Activated naive CD4-positive, alpha-beta T cell treated with anti-CD3 and anti-CD28 coated beads for 36 hours (primary cell): ENCODE measurements at regions of chr14 and their contacts with region 1.

Region 1: DNA sequence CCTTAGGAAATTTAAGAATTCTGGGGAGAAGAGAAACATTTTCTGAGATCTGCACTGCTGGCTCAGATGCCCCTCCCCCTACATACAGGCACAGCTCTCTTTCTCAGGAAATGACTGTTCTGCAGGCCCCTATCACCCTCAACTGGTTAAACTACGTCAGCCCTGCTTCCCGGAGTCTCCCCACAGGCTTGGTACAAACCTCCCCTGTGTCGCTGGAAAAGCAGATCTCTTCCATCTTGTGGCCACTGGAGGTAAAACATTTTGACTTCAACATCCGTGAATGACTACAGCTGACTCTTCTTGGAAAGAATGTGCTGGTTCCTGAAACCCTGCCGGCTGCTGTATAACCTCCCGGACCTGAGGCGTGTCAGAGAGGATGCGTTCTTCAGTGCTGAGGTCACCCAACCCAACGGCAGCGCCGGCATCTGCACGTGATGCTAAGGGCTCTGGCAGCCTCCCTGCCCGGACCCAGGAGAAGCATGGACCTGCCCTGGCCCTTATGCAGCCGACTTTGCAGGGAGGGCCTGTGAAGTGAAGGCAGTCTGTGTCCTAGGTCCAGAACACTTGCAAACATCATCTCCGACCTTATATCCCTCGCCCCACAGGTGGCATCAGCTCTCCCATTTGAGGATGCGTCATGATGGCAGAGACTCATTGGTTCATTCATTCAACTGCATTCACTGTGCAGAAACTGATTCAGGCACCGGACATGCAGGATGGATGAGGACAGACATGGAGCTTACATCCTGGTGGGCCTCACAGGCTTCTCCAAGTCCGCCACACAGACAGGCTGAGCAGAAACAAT is 129.3 kb downstream of the GCH1 start:
- DNase-seq: peak; percentile 95
- H3K4me3 Mint-ChIP-seq: peak overlapping the region; percentile 44
- H3K27ac Mint-ChIP-seq: peak overlapping the region; percentile 84
- H3K4me1 Mint-ChIP-seq: peaks cover 51% of the 10 kb centered on the region
- H3K27me3 Mint-ChIP-seq: no peaks in the 10 kb centered on the region

Region 2: DNA sequence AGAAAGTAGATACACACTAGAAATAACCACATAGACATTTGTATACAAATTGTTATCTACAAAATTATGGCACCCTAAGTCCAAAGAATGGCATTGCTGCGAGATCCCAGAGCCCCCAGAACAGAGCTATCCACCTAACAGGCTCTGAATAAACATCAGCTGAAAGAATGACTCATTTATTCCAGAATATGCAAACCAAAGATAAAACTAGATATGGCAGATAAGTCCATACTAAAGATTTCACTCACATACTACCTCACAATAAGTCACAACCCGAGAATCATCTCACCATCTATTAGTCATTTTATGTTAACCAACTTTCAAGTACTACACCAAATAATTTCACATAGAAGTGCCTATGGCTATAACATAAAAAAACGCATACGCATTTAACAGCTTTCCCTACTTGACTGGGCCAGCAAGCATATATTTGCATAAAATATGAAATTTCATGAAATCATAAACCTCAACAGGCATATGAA is 337.8 kb before region 1 on chr14:
- CTCF ChIA-PET with region 1: no interaction called
- intact Hi-C with region 1: loop called (anchors 1 kb)
- DNase-seq: peak; percentile 16
- H3K4me3 Mint-ChIP-seq: peak overlapping the region; percentile 3
- H3K27ac Mint-ChIP-seq: peak overlapping the region; percentile 80
- H3K4me1 Mint-ChIP-seq: peaks cover 81% of the 10 kb centered on the region
- H3K27me3 Mint-ChIP-seq: no peaks in the 10 kb centered on the region

Region 3: DNA sequence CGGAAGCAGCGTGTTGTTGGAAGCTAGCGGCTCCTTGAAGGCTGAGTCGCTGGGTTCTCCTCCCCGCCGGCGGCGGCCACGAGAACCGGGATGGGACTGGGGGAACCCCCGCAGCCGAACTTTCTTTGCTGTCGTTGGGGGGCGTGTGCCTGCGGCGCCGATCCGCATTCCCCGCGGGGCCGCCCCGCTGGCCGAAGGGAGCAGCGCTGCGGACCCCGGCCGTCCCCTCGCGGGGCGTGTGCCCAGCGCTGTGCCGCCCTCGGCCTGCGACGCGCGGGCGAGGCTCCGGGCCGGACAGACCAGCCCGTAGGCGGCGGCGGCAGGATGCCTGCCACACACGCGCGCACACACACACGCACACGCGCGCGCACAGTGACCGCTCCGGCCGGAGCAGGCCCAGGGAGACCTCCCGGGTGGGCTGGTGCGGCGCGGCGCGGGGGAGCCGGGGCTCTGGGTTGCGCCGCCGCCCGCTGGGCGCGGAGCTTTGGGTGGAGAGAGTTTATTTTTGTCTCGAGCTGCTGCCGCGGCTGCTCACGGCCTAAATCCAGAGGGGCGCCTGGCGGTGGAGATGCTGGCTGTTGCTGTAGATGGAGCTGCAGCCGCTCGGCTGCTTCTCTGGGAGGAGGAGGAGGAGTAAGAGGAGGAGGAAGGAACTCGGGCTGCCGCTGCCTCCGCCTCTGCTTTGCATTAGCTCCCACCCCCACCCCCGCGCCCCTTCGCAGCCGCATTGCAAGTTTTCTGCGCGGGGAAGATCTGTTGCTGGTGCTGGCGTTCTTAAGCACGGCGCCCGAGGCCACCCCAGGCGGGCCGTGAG is 206.8 kb before region 1 on chr14 and contains the start of gene SAMD4A:
- CTCF ChIA-PET with region 1: interaction called, 217 read pairs
- intact Hi-C with region 1: loop called (anchors 1 kb)
- DNase-seq: peak; percentile 75
- H3K4me3 Mint-ChIP-seq: peak within 1 kb of the TSS; percentile 94
- H3K27ac Mint-ChIP-seq: peak within 1 kb of the TSS; percentile 79
- H3K4me1 Mint-ChIP-seq: peaks cover 26% of the 10 kb centered on the region
- H3K27me3 Mint-ChIP-seq: no peaks in the 10 kb centered on the region
- total RNA-seq, gene SAMD4A: 4.7 to 4.9 TPM

Region 4: GRCh38 chr14:54669721-54670561 is 103.4 kb before region 1 on chr14:
- CTCF ChIA-PET with region 1: interaction called, 32 read pairs
- intact Hi-C with region 1: loop called (anchors 1 kb)
- DNase-seq: peak; percentile 51
- H3K4me3 Mint-ChIP-seq: no peak overlapping the region
- H3K27ac Mint-ChIP-seq: no peak overlapping the region
- H3K4me1 Mint-ChIP-seq: peaks cover 30% of the 10 kb centered on the region
- H3K27me3 Mint-ChIP-seq: peaks cover 6% of the 10 kb centered on the region

Region 5: GRCh38 chr14:54722781-54723432 is 50.5 kb before region 1 on chr14:
- CTCF ChIA-PET with region 1: interaction called, 27 read pairs
- intact Hi-C with region 1: loop called (anchors 1 kb)
- DNase-seq: peak; percentile 47
- H3K4me3 Mint-ChIP-seq: no peak overlapping the region
- H3K27ac Mint-ChIP-seq: no peak overlapping the region
- H3K4me1 Mint-ChIP-seq: peaks cover 8% of the 10 kb centered on the region
- H3K27me3 Mint-ChIP-seq: peaks cover 5% of the 10 kb centered on the region

Region 6: DNA sequence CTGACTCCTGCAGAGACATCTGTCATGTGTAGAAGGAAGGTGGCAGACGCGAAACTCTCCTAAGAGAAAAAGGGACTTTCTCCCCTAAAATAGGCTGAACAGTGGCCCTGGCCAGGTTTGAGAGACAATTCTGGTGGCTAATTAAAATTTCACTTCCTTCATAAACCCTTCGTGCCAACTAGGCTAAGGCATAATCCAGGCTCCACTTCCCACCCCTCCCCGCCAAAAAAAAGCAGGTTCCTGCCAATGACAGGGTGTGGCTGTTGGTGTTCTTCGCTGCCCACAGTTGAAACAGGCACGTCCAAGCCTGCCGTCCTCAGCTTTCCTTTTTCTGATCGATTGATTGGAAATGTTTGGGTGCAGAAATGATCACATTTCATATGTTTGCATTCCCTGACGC is 15.3 kb before region 1 on chr14:
- CTCF ChIA-PET with region 1: interaction called, 13 read pairs
- intact Hi-C with region 1: no loop called
- DNase-seq: no peak
- H3K4me3 Mint-ChIP-seq: no peak overlapping the region
- H3K27ac Mint-ChIP-seq: no peak overlapping the region
- H3K4me1 Mint-ChIP-seq: peaks cover 7% of the 10 kb centered on the region
- H3K27me3 Mint-ChIP-seq: no peaks in the 10 kb centered on the region

Region 7: GRCh38 chr14:55373784-55374705 is 600.7 kb after region 1 on chr14:
- CTCF ChIA-PET with region 1: no interaction called
- intact Hi-C with region 1: loop called (anchors 1 kb)
- DNase-seq: peak; percentile 58
- H3K4me3 Mint-ChIP-seq: peak overlapping the region; percentile 45
- H3K27ac Mint-ChIP-seq: peak overlapping the region; percentile 97
- H3K4me1 Mint-ChIP-seq: peaks cover 43% of the 10 kb centered on the region
- H3K27me3 Mint-ChIP-seq: no peaks in the 10 kb centered on the region